MCF 10A (cell line): ENCODE measurements at regions of chr16 and their contacts with region 1.

Region 1: DNA sequence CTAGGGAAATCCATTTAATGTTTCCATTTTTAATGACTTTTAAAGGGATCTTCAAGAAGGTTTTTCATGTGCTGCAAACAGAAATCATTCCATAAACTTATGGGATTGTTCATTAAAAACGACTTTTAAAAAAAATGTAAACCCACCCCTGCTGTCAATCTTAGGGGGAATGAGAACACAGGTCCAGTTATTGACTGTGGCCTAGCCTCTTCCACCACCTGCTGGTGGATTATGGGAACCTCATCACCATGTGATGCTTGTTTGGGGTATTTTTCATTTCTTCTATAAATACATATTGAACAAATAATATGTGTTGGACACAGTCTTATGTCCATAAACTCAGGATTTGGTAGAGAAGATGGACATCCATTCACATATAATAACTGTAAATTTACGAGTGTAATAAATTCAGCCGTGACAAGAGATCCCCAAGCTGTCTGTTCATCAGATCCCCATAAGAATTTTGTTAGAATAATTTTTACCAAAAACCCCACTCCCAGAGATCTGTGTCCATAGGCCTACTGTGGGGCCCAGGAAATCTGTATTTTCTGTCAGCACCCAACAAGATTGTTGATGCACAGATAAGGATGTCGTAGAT is 42.0 kb upstream of the TMC5 start:
- DNase-seq: peak; percentile 64
- H3K4me3 Mint-ChIP-seq: no peak overlapping the region
- H3K27ac Mint-ChIP-seq: no peak overlapping the region
- H3K4me1 Mint-ChIP-seq: no peaks in the 10 kb centered on the region
- H3K27me3 Mint-ChIP-seq: no peaks in the 10 kb centered on the region
- CTCF ChIP-seq: peak; percentile 90

Region 2: GRCh38 chr16:19167710-19168370 is 207.8 kb before region 1 on chr16 and contains the start of gene SYT17:
- CTCF ChIA-PET with region 1: interaction called, 5 read pairs
- POLR2A ChIA-PET with region 1: no interaction called
- intact Hi-C with region 1: loop called (anchors 1 kb)
- DNase-seq: peak; percentile 59
- H3K4me3 Mint-ChIP-seq: peak within 1 kb of the TSS; percentile 46
- H3K27ac Mint-ChIP-seq: no peak within 1 kb of the TSS
- H3K4me1 Mint-ChIP-seq: no peaks in the 10 kb centered on the region
- H3K27me3 Mint-ChIP-seq: peaks cover 28% of the 10 kb centered on the region
- CTCF ChIP-seq: peak; percentile 82
- total RNA-seq, gene SYT17: not detected in 2 replicates

Region 3: DNA sequence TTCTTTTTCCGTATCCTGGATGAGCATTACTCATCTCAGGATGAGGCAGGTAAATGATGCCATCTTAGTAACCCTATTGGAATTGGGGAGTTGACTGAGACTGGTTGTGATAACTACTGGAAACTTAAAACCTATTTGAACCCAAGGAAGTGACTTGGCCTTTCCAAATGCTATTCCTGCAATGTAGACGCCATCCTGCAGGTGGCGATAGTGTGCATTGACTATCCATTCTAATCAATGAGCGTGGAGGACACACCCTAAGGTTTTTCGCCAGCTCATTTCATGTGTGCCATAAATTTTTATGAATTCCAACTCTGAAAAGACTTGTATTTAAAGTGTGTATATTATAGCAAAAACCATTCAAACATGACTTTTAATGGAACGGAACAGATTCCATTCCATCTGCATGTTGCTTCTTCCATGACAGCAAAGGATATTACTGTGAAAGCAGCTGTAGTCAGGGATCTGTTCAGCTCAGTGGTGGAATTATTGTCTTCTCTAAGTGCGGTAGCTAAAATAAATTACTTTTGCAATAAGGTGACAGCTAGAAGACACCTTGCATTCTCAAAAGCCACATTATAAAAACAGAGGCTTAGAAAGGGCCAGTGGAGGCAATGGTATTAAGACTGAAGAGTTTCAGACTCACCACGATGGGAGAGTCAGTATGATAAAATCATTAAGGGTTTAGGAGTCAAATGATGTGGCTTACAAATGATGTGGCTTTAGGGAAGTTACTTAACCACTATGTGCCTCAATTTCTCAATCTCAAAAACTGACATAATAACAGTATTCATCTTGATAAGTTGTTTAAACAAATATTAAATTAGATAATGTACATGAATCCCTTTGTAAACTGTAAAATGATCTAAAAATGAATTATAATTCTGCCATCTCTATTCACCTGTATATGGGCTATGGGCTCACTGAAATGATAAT is 152.2 kb before region 1 on chr16:
- CTCF ChIA-PET with region 1: interaction called, 6 read pairs
- POLR2A ChIA-PET with region 1: no interaction called
- intact Hi-C with region 1: loop called (anchors 5 kb)
- DNase-seq: peak; percentile 61
- H3K4me3 Mint-ChIP-seq: no peak overlapping the region
- H3K27ac Mint-ChIP-seq: no peak overlapping the region
- H3K4me1 Mint-ChIP-seq: peaks cover 11% of the 10 kb centered on the region
- H3K27me3 Mint-ChIP-seq: peaks cover 3% of the 10 kb centered on the region
- CTCF ChIP-seq: peak; percentile 58

Region 4: DNA sequence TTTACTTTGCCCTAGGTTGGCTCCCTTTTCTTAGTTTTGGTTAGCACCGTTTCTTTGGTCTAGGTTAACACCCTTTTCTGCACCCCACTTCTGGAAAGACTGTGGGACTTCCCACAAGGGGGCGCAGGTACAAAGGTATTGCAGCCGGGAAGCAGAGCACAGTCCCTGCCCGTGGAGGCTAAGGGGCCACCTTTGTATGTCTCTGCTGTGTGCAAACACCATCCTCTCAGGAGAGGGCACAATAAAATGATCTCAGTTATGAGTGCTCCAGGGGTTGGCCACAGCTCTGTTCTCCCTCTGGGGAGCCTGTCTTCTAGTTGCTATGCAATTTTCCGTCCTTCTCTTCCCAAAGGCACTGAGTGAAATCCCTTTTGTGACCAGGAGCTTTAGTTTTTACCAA is 13.6 kb after region 1 on chr16:
- CTCF ChIA-PET with region 1: interaction called, 11 read pairs
- POLR2A ChIA-PET with region 1: interaction called, 3 read pairs
- intact Hi-C with region 1: no loop called
- DNase-seq: peak; percentile 73
- H3K4me3 Mint-ChIP-seq: no peak overlapping the region
- H3K27ac Mint-ChIP-seq: no peak overlapping the region
- H3K4me1 Mint-ChIP-seq: peaks cover 20% of the 10 kb centered on the region
- H3K27me3 Mint-ChIP-seq: no peaks in the 10 kb centered on the region
- CTCF ChIP-seq: peak; percentile 51